Tibial artery (tissue), 4 donors: ENCODE measurements at regions of chr7 and their contacts with region 1.

Region 1: GRCh38 chr7:101165075-101165957 is at the start of gene VGF:
- DNase-seq: peak; percentile 89 to 90
- H3K4me3 ChIP-seq: peak within 1 kb of the TSS in 1 of 2 donors; percentile 6
- H3K27ac ChIP-seq: no peak within 1 kb of the TSS
- H3K4me1 ChIP-seq: peaks cover 0 to 51% (median 40%) of the 10 kb centered on the region in 4 donors
- H3K27me3 ChIP-seq: peaks cover 5 to 100% of the 10 kb centered on the region in 2 donors
- CTCF ChIP-seq: no peak

Region 2: GRCh38 chr7:100889761-100890634 is 275.3 kb before region 1 on chr7:
- intact Hi-C with region 1: loop called (anchors 10 kb)
- DNase-seq: peak; percentile 92 to 96
- H3K4me3 ChIP-seq: peak overlapping the region; percentile 59 to 67
- H3K27ac ChIP-seq: peak overlapping the region; percentile 85 to 94
- H3K4me1 ChIP-seq: peaks cover 5 to 39% (median 30%) of the 10 kb centered on the region in 4 donors
- H3K27me3 ChIP-seq: peaks cover 0 to 20% of the 10 kb centered on the region in 2 donors
- CTCF ChIP-seq: no peak

Region 3: GRCh38 chr7:101031082-101031481 is 134.2 kb before region 1 on chr7:
- intact Hi-C with region 1: no loop called
- DNase-seq: no peak
- H3K4me3 ChIP-seq: no peak overlapping the region
- H3K27ac ChIP-seq: no peak overlapping the region
- H3K4me1 ChIP-seq: no peaks in the 10 kb centered on the region
- H3K27me3 ChIP-seq: no peaks in the 10 kb centered on the region
- CTCF ChIP-seq: no peak